CD4-positive, alpha-beta T cell (primary cell): ENCODE measurements at regions of chr3 and their contacts with region 1.

Region 1: GRCh38 chr3:177597311-177598096 is 400.2 kb upstream of the TBL1XR1 start:
- DNase-seq: peak in 7 of 14 experiments; percentile 3 to 85 (median 29)
- ATAC-seq: peak; percentile 93
- H3K4me3 ChIP-seq: peak overlapping the region; percentile 8
- H3K4me3 Mint-ChIP-seq: peak overlapping the region; percentile 83
- H3K27ac ChIP-seq: peak overlapping the region; percentile 67 to 79
- H3K27ac Mint-ChIP-seq: peak overlapping the region; percentile 96
- H3K4me1 ChIP-seq: peaks cover 37% of the 10 kb centered on the region
- H3K4me1 Mint-ChIP-seq: peaks cover 84% of the 10 kb centered on the region
- H3K27me3 ChIP-seq: no peaks in the 10 kb centered on the region
- H3K27me3 Mint-ChIP-seq: no peaks in the 10 kb centered on the region
- CTCF ChIP-seq: no peak

Region 2: DNA sequence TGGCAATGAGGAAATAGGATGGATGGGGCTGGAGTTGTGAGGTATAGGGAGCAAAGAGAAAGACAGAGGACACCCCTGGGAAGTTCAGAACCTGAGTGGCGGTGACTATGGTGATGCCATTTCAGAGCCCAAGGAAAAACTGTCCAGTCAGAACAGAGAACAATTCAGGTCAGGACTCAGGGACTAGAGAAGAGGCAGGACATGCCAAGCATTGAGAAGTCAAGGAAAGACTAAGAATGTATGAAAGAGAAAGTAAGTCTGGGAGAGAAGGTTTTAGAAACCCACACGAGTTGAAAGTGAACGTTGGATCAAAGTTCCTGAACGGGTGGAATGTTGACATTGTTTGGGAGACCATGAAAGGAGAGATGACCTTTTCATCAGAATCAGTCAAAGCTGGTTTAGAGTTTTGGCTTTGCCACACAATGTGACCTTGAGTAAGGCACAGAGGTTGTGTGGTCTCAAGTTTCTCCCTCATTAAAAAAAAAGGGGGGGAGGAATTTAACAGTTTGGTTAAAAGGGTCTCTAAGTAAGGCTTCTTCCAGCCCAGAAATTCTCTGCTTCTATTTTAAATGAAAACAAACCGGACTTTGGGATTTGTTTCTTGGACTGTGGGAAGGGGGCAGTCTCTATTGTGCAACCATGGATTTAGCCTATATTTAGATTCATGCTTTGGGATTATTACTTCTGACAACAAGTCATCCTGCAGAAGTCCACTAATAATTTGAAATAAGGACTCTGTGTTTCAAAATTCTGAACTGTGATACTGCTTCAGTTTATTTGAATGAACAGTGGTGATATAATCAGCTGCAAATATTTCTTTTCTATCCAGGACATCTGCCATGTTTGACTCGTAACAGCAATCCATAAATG is 84.3 kb before region 1 on chr3:
- CTCF ChIA-PET with region 1: no interaction called
- POLR2A ChIA-PET with region 1: no interaction called
- intact Hi-C with region 1: no loop called
- DNase-seq: no peak
- ATAC-seq: no peak
- H3K4me3 ChIP-seq: no peak overlapping the region
- H3K4me3 Mint-ChIP-seq: no peak overlapping the region
- H3K27ac ChIP-seq: no peak overlapping the region
- H3K27ac Mint-ChIP-seq: no peak overlapping the region
- H3K4me1 ChIP-seq: no peaks in the 10 kb centered on the region
- H3K4me1 Mint-ChIP-seq: no peaks in the 10 kb centered on the region
- H3K27me3 ChIP-seq: no peaks in the 10 kb centered on the region
- H3K27me3 Mint-ChIP-seq: no peaks in the 10 kb centered on the region
- CTCF ChIP-seq: no peak

Region 3: GRCh38 chr3:177538750-177539730 is 58.5 kb before region 1 on chr3:
- CTCF ChIA-PET with region 1: no interaction called
- POLR2A ChIA-PET with region 1: interaction called, 11 read pairs
- intact Hi-C with region 1: loop called (anchors 5 to 10 kb)
- DNase-seq: peak in 4 of 14 experiments; percentile 20 to 79 (median 55)
- ATAC-seq: peak; percentile 59
- H3K4me3 ChIP-seq: peak overlapping the region; percentile 19
- H3K4me3 Mint-ChIP-seq: peak overlapping the region; percentile 74
- H3K27ac ChIP-seq: peak overlapping the region; percentile 19 to 31
- H3K27ac Mint-ChIP-seq: peak overlapping the region; percentile 83
- H3K4me1 ChIP-seq: peaks cover 27% of the 10 kb centered on the region
- H3K4me1 Mint-ChIP-seq: peaks cover 65% of the 10 kb centered on the region
- H3K27me3 ChIP-seq: no peaks in the 10 kb centered on the region
- H3K27me3 Mint-ChIP-seq: no peaks in the 10 kb centered on the region
- CTCF ChIP-seq: no peak

Region 4: GRCh38 chr3:177547711-177548350 is 49.7 kb before region 1 on chr3:
- CTCF ChIA-PET with region 1: no interaction called
- POLR2A ChIA-PET with region 1: no interaction called
- intact Hi-C with region 1: loop called (anchors 5 to 10 kb)
- DNase-seq: peak in 3 of 14 experiments; percentile 15 to 28 (median 24)
- ATAC-seq: peak; percentile 49
- H3K4me3 ChIP-seq: no peak overlapping the region
- H3K4me3 Mint-ChIP-seq: peak overlapping the region; percentile 68
- H3K27ac ChIP-seq: no peak overlapping the region
- H3K27ac Mint-ChIP-seq: peak overlapping the region; percentile 77
- H3K4me1 ChIP-seq: peaks cover 53% of the 10 kb centered on the region
- H3K4me1 Mint-ChIP-seq: peaks cover 88% of the 10 kb centered on the region
- H3K27me3 ChIP-seq: no peaks in the 10 kb centered on the region
- H3K27me3 Mint-ChIP-seq: no peaks in the 10 kb centered on the region
- CTCF ChIP-seq: no peak

Region 5: GRCh38 chr3:177610677-177611633 is 13.5 kb after region 1 on chr3:
- CTCF ChIA-PET with region 1: interaction called, 4 read pairs
- POLR2A ChIA-PET with region 1: interaction called, 16 read pairs
- intact Hi-C with region 1: no loop called
- DNase-seq: peak in 10 of 14 experiments; percentile 6 to 53 (median 18)
- ATAC-seq: no peak
- H3K4me3 ChIP-seq: no peak overlapping the region
- H3K4me3 Mint-ChIP-seq: no peak overlapping the region
- H3K27ac ChIP-seq: no peak overlapping the region
- H3K27ac Mint-ChIP-seq: no peak overlapping the region
- H3K4me1 ChIP-seq: no peaks in the 10 kb centered on the region
- H3K4me1 Mint-ChIP-seq: peaks cover 35% of the 10 kb centered on the region
- H3K27me3 ChIP-seq: no peaks in the 10 kb centered on the region
- H3K27me3 Mint-ChIP-seq: no peaks in the 10 kb centered on the region
- CTCF ChIP-seq: no peak

Region 6: GRCh38 chr3:177646749-177647148 is 49.2 kb after region 1 on chr3:
- CTCF ChIA-PET with region 1: no interaction called
- POLR2A ChIA-PET with region 1: interaction called, 13 read pairs
- intact Hi-C with region 1: loop called (anchors 5 to 10 kb)
- DNase-seq: peak in 7 of 14 experiments; percentile 11 to 77 (median 37)
- ATAC-seq: peak; percentile 51
- H3K4me3 ChIP-seq: no peak overlapping the region
- H3K4me3 Mint-ChIP-seq: peak overlapping the region; percentile 58
- H3K27ac ChIP-seq: no peak overlapping the region
- H3K27ac Mint-ChIP-seq: peak overlapping the region; percentile 69
- H3K4me1 ChIP-seq: peaks cover 49% of the 10 kb centered on the region
- H3K4me1 Mint-ChIP-seq: peaks cover 72% of the 10 kb centered on the region
- H3K27me3 ChIP-seq: no peaks in the 10 kb centered on the region
- H3K27me3 Mint-ChIP-seq: no peaks in the 10 kb centered on the region
- CTCF ChIP-seq: no peak